H1 (cell line): ENCODE measurements at regions of chr5 and their contacts with region 1.

Region 1: DNA sequence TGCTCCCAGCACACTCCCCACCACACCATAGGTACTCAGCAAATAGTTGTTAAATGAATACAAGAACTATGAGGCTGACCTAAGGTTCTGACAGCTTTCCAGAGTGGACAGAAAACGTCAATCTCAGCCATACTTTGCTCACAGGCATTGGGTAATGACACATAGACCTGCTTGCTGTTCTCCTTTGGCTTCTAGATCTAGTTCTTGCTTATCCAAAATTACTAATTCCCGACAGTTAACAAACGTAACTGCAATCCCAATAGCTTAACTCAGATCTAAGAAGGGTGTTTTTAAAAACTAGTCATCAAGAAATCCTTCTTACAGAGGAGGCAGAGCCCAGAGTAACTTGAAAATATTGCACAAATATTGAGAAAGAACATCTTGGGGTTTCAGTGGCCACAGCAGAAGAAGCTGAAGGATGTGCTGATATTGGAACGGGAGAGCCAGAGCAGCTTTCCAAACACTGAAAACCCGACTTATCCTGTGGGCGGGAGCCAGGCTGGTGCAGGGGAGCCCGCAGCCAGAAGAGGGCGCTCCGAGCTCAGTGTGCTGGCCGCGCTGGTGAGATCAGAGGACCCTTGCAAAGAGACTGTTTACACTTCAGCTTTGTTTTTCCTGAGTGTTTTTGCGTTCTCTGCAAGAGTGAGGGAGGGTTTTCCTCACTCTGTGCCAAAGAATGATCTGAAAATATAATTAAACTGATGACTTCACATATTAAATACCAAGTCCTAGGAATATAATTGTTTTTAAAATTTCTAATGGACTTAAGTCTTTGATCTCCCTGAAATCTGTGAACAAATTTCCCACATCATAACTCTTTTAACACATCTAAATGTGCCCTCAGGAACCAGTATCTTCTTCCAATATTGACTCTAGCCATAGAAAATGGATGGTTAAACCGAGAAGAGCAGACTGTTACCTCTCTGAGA is 30.3 kb downstream of the FGF1 start:
- DNase-seq: peak; percentile 53 to 96
- H3K4me3 ChIP-seq: no peak overlapping the region
- H3K27ac ChIP-seq: no peak overlapping the region
- H3K4me1 ChIP-seq: no peaks in the 10 kb centered on the region
- H3K27me3 ChIP-seq: no peaks in the 10 kb centered on the region
- CTCF ChIP-seq: peak; percentile 98 to 99 (median 99)
- EP300 ChIP-seq: no peak
- POLR2A ChIP-seq: no peak
- RAD21 ChIP-seq: peak; percentile 98

Region 2: GRCh38 chr5:142605611-142606010 is 50.0 kb before region 1 on chr5:
- CTCF ChIA-PET with region 1: interaction called, 68 read pairs
- POLR2A ChIA-PET with region 1: no interaction called
- DNase-seq: no peak
- H3K4me3 ChIP-seq: no peak overlapping the region
- H3K27ac ChIP-seq: no peak overlapping the region
- H3K4me1 ChIP-seq: no peaks in the 10 kb centered on the region; a peak in 1 of 7 replicates
- H3K27me3 ChIP-seq: no peaks in the 10 kb centered on the region
- CTCF ChIP-seq: no peak
- EP300 ChIP-seq: no peak
- POLR2A ChIP-seq: no peak
- RAD21 ChIP-seq: no peak

Region 3: GRCh38 chr5:142618130-142618523 is 37.5 kb before region 1 on chr5:
- CTCF ChIA-PET with region 1: interaction called, 16 read pairs
- POLR2A ChIA-PET with region 1: no interaction called
- DNase-seq: no peak
- H3K4me3 ChIP-seq: no peak overlapping the region
- H3K27ac ChIP-seq: no peak overlapping the region
- H3K4me1 ChIP-seq: no peaks in the 10 kb centered on the region
- H3K27me3 ChIP-seq: no peaks in the 10 kb centered on the region
- CTCF ChIP-seq: no peak
- EP300 ChIP-seq: no peak
- POLR2A ChIP-seq: no peak
- RAD21 ChIP-seq: no peak

Region 4: GRCh38 chr5:142644640-142645361 is 10.8 kb before region 1 on chr5:
- CTCF ChIA-PET with region 1: interaction called, 81 read pairs
- POLR2A ChIA-PET with region 1: no interaction called
- DNase-seq: no peak
- H3K4me3 ChIP-seq: no peak overlapping the region
- H3K27ac ChIP-seq: no peak overlapping the region
- H3K4me1 ChIP-seq: no peaks in the 10 kb centered on the region
- H3K27me3 ChIP-seq: no peaks in the 10 kb centered on the region
- CTCF ChIP-seq: no peak
- EP300 ChIP-seq: no peak
- POLR2A ChIP-seq: no peak
- RAD21 ChIP-seq: no peak

Region 5: DNA sequence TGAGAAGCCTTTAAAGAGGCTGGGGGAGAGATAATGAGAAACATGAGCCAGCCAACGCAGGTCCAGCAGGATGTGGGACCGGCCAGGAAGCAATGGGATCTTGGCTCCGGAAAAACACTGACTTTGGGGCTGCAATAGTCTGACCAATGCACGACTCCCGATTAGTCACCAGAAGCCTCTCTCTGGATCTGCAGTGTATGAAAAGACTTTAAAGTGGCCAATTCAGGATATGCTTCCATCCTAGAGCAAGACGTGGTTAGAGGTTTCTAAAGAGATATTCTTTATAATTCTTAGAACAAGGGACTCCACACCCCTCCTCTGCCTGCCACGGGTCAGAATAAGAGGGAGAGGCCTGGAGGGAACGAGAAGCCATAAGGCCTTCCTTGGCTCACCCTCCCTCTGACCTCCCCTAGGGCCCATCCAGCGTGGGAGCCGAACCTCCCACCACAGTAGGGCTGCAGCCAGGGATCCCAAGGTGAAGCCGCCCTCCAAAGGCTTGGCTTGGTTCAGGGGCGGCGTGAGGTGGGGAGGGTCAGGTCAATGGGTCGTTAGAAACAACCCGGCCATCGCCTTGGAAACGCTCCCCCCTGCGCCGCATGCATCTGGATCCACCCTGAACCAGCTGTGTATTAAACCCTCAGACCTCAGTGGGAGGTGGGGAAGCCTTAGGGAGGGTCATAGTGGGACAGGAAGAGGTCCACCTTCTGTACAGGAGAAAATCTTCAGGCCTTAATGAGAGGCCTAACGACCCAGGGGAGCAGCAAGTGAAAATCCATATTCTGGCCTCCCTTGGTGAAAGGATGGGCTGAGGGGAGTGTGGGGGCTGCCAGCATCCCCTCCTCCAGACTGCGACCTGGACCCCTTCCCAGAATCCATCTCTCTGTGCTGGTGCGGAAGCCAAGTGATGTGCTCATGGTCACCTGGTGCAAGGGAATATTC is 19.2 kb after region 1 on chr5:
- CTCF ChIA-PET with region 1: interaction called, 23 read pairs
- POLR2A ChIA-PET with region 1: interaction called, 3 read pairs
- DNase-seq: no peak
- H3K4me3 ChIP-seq: no peak overlapping the region
- H3K27ac ChIP-seq: no peak overlapping the region
- H3K4me1 ChIP-seq: peaks cover 0 to 3% (median 0%) of the 10 kb centered on the region in 4 experiments; a peak in 1 of 7 replicates
- H3K27me3 ChIP-seq: no peaks in the 10 kb centered on the region; a peak in 2 of 7 replicates
- CTCF ChIP-seq: no peak
- EP300 ChIP-seq: no peak
- POLR2A ChIP-seq: no peak
- RAD21 ChIP-seq: no peak